Ascending aorta (tissue), 2 donors: ENCODE measurements at regions of chr3 and their contacts with region 1.

Region 1: DNA sequence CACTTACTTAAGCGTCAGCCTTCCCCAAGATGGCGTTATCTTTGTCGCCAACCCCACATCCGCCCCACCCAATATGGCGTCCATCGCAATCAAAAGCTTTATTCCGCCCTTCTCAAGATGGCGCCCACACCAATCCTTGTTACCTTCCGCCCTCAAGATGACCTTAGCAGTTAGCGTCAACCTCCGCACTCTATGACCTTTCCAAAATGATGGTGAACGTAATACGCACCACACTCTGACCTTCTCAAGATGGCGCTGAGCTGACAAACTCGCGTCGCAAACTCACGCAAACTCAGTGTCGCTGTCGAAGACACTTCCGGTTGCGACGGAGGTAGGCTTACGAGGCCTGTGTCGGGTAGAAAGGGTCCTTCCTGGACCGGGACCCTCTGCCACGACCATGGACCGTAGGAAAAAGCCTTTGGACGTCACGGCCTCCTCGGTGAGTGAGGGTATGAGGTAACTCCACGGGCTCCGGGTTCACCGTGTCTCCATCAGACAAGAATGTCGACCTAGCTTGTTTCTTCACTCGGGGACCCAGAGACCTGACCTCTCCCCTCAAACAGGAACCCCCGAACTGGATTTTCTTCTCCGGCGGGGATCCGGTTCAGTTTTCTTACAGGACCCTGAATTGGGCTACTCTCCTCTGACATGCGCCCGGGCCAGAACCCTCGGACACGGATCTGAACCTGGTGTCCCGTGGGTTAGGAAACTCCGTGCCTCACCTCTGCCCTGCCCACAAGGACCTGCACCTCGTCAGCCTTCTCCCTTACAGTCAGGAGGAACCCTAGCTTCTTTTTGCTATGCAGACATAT is at the start of gene CCDC174:
- DNase-seq: peak; percentile 89 to 98
- H3K4me3 ChIP-seq: peak within 1 kb of the TSS; percentile 64 to 80
- H3K27ac ChIP-seq: peak within 1 kb of the TSS; percentile 77 to 91
- H3K4me1 ChIP-seq: peaks cover 7 to 16% of the 10 kb centered on the region in 2 donors
- H3K27me3 ChIP-seq: no peaks in the 10 kb centered on the region
- CTCF ChIP-seq: no peak
- total RNA-seq, gene CCDC174: 5.5 TPM

Region 2: DNA sequence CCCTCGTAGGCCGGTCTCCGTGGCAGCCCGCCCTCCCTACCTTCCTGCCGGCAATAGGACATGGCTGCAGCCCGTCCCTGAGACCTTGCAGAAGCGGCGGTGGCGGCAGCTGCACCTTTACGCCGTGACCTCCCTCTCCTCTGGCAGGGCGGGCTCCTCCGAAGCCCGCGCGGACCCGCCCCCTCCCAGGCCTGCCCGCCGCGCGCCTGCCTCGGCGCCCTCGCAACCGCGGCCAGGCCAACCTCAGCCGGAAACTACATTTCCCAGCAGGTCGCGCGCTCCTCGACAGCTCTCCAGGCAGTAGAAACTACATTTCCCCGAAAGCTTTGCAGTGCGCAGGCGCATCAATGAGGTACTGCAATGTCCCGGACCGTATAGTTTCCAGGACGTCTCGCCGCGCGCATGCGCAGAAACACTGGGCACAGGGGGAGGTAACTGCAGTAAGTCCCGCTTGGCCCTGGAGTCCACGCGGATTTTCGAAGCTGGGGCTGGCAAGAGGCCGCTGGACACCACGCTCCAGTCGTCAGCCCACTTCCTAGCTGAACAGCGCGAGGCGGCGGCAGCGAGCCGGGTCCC is 526.9 kb before region 1 on chr3 and contains the starts of genes CHCHD4 and TMEM43:
- intact Hi-C with region 1: loop called (anchors 1 kb)
- DNase-seq: peak; percentile 98 to 100
- H3K4me3 ChIP-seq: peak within 1 kb of the TSS; percentile 84 to 100
- H3K27ac ChIP-seq: peak within 1 kb of the TSS; percentile 96 to 98
- H3K4me1 ChIP-seq: peaks cover 19 to 26% of the 10 kb centered on the region in 2 donors
- H3K27me3 ChIP-seq: no peaks in the 10 kb centered on the region
- CTCF ChIP-seq: peak in 1 of 3 experiments; percentile 2
- total RNA-seq, gene CHCHD4: 1.9 TPM
- total RNA-seq, gene TMEM43: 166 TPM

Region 3: GRCh38 chr3:14461748-14462324 is 189.8 kb before region 1 on chr3:
- intact Hi-C with region 1: loop called (anchors 10 kb)
- DNase-seq: no peak
- H3K4me3 ChIP-seq: no peak overlapping the region
- H3K27ac ChIP-seq: no peak overlapping the region
- H3K4me1 ChIP-seq: peaks cover 7 to 18% of the 10 kb centered on the region in 2 donors
- H3K27me3 ChIP-seq: no peaks in the 10 kb centered on the region
- CTCF ChIP-seq: peak; percentile 50 to 66 (median 63)

Region 4: GRCh38 chr3:15098503-15099363 is 447.1 kb after region 1 on chr3 and contains the start of gene RBSN:
- intact Hi-C with region 1: loop called (anchors 2 kb)
- DNase-seq: peak; percentile 85 to 96
- H3K4me3 ChIP-seq: peak within 1 kb of the TSS; percentile 88 to 93
- H3K27ac ChIP-seq: peak within 1 kb of the TSS; percentile 91
- H3K4me1 ChIP-seq: peaks cover 0 to 47% of the 10 kb centered on the region in 2 donors
- H3K27me3 ChIP-seq: no peaks in the 10 kb centered on the region
- CTCF ChIP-seq: no peak
- total RNA-seq, gene RBSN: 17.2 TPM

Region 5: DNA sequence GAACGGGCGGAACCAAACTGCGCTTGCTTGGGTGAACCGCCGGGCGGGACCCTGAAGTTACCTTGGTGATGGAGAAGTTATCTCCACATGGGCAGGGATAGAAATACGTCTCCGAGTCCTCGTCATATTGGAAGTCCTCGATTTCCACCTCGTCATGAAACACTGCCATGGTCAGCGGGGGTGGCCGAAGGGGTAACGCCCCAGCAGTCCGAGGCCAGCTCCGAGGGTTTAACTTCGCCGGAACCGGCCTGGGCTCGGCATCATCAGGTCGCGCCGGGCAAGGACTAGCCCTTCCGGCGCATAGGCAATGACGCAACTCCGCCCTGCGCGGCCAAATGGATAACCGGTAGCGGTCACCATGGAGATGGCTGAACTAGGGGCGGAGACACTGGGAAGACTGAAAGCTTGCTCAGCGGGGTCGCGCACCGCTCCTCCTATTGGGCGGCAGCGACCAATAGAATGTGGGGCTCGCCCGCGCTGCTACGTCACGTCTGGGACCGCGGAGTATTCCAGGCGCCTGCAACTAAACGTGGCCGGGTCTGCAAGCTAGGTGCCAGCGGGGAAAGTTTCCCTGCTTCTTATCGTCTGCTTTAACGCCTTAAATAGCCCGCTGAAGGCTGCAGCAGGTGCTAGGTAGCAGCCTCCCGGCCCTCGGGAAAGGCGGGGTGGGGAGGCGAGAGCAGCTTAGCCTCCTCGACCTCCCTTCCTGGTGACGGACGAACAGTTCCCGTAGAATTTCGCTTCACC is 1613.2 kb after region 1 on chr3 and contains the starts of genes DPH3 and OXNAD1:
- intact Hi-C with region 1: loop called (anchors 5 kb)
- DNase-seq: peak; percentile 99 to 100
- H3K4me3 ChIP-seq: peak within 1 kb of the TSS; percentile 65 to 84
- H3K27ac ChIP-seq: peak within 1 kb of the TSS; percentile 81 to 88
- H3K4me1 ChIP-seq: peaks cover 0 to 25% of the 10 kb centered on the region in 2 donors
- H3K27me3 ChIP-seq: no peaks in the 10 kb centered on the region
- CTCF ChIP-seq: peak in 1 of 3 experiments; percentile 16
- total RNA-seq, gene DPH3: 5.5 TPM
- total RNA-seq, gene OXNAD1: 6.9 TPM